ENCODE measurements at regions of chr1 and their contacts with region 1.

Region 1: DNA sequence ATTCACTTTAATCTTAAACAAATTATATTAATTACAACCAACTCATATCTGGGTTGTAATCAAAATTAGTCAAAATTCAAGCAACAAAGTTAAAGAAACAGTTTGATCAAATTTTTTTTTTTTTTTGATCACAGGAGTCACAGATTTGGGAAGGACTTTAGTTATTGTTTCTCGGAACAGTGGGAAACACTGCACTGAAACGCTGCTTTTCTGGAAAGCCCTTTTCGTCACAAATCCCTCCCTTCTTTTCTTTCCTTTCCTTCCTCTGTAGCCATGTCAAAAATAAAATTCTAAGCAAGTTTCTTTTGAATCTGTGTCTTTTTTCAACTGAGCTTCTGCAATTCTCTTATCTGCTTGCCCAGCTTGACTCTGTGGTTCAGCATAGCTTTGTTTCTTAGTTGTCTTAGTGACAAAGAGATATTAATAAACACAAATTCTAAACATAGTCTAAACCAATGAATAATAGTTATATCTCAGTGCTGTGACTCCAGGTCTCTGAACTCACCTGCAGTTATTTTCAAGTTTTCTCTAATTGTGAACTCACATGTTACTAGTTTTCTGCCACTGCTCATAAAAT is 53.8 kb downstream of the PTGS2 start:
- DNase-seq: no peak
- H3K4me3 ChIP-seq: no peak overlapping the region
- H3K27ac ChIP-seq: no peak overlapping the region
- H3K4me1 ChIP-seq: no peaks in the 10 kb centered on the region
- H3K27me3 ChIP-seq: no peaks in the 10 kb centered on the region
- CTCF ChIP-seq: no peak
- POLR2A ChIP-seq: no peak

Region 2: GRCh38 chr1:186662740-186663139 is 36.3 kb after region 1 on chr1:
- intact Hi-C with region 1: loop called (anchors 2 kb)
- DNase-seq: no peak
- H3K4me3 ChIP-seq: no peak overlapping the region
- H3K27ac ChIP-seq: no peak overlapping the region
- H3K4me1 ChIP-seq: no peaks in the 10 kb centered on the region
- H3K27me3 ChIP-seq: no peaks in the 10 kb centered on the region
- CTCF ChIP-seq: no peak
- POLR2A ChIP-seq: no peak

Region 3: DNA sequence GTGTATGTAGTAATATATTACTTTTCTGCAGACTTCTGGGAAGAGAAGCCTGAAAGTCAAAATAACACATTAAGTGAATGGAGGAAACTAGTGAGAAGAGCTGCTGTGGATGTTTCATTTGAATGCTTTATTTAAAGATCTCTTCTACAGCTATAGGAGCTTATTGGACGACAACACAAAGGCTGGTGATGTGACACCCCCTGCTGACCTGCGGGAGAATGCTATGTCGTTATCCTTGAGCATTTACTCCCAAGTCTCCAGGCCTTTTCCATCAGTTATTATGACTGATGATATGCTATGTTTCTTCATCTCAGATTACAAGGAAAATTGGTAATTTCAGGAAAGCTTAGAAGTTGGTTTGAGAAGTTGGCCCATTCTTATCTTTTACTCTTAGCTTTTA is 180.0 kb after region 1 on chr1:
- intact Hi-C with region 1: no loop called
- DNase-seq: no peak
- H3K4me3 ChIP-seq: no peak overlapping the region
- H3K27ac ChIP-seq: no peak overlapping the region
- H3K4me1 ChIP-seq: no peaks in the 10 kb centered on the region
- H3K27me3 ChIP-seq: no peaks in the 10 kb centered on the region
- CTCF ChIP-seq: no peak
- POLR2A ChIP-seq: no peak